ENCODE measurements at regions of chr13 and their contacts with region 1.

Region 1: DNA sequence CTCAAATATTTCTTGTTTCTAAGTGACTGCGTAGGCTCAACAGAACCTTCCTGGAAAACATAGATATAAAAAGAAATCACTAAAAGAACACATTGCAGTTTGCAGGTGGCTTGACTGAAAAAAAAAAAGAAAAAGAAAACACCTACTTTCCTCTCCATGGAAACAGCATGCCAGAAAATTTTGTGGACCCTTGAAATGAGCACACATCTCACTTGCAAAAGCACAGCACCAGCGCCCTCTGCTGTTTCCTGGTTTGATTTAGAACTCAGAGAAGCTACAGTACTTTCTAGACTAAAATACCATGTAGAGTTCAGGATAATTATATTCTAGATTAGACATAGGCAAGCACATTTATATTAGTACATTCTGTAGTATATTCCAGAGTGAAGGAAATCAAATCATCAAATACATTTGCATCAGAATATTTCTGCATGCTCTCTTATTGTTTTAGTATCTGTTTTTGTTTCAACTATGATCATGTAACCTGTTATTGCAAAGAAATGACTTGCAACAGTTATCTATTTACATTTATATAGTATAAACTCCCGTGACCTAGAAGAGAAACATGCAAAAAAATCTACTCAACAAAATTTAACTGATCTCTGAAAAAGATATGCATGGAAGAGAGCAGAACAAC is 22.3 kb upstream of the XPO4 start:
- DNase-seq: peak; percentile 46 to 80 (median 78)
- ATAC-seq: peak; percentile 44
- H3K4me3 ChIP-seq: no peak overlapping the region
- H3K4me3 Mint-ChIP-seq: no peak overlapping the region
- H3K27ac ChIP-seq: no peak overlapping the region
- H3K27ac Mint-ChIP-seq: no peak overlapping the region
- H3K4me1 ChIP-seq: no peaks in the 10 kb centered on the region
- H3K4me1 Mint-ChIP-seq: no peaks in the 10 kb centered on the region
- H3K27me3 ChIP-seq: no peaks in the 10 kb centered on the region
- H3K27me3 Mint-ChIP-seq: peaks cover 2% of the 10 kb centered on the region
- CTCF ChIP-seq: peak; percentile 87

Region 2: GRCh38 chr13:20019043-20019442 is 905.8 kb before region 1 on chr13:
- CTCF ChIA-PET with region 1: no interaction called
- POLR2A ChIA-PET with region 1: interaction called, 10 read pairs
- intact Hi-C with region 1: no loop called
- DNase-seq: no peak
- ATAC-seq: no peak
- H3K4me3 ChIP-seq: no peak overlapping the region
- H3K4me3 Mint-ChIP-seq: no peak overlapping the region
- H3K27ac ChIP-seq: no peak overlapping the region
- H3K27ac Mint-ChIP-seq: no peak overlapping the region
- H3K4me1 ChIP-seq: no peaks in the 10 kb centered on the region
- H3K4me1 Mint-ChIP-seq: peaks cover 29% of the 10 kb centered on the region
- H3K27me3 ChIP-seq: no peaks in the 10 kb centered on the region
- H3K27me3 Mint-ChIP-seq: no peaks in the 10 kb centered on the region
- CTCF ChIP-seq: no peak

Region 3: GRCh38 chr13:20182231-20182846 is 742.5 kb before region 1 on chr13:
- CTCF ChIA-PET with region 1: no interaction called
- POLR2A ChIA-PET with region 1: no interaction called
- intact Hi-C with region 1: loop called (anchors 1 kb)
- DNase-seq: peak in 8 of 9 experiments; percentile 12 to 84 (median 54)
- ATAC-seq: peak; percentile 100
- H3K4me3 ChIP-seq: no peak overlapping the region
- H3K4me3 Mint-ChIP-seq: no peak overlapping the region
- H3K27ac ChIP-seq: no peak overlapping the region
- H3K27ac Mint-ChIP-seq: no peak overlapping the region
- H3K4me1 ChIP-seq: no peaks in the 10 kb centered on the region
- H3K4me1 Mint-ChIP-seq: peaks cover 3% of the 10 kb centered on the region
- H3K27me3 ChIP-seq: no peaks in the 10 kb centered on the region
- H3K27me3 Mint-ChIP-seq: peaks cover 42% of the 10 kb centered on the region
- CTCF ChIP-seq: peak; percentile 62

Region 4: GRCh38 chr13:20197361-20197834 is 727.5 kb before region 1 on chr13:
- CTCF ChIA-PET with region 1: interaction called, 8 read pairs
- POLR2A ChIA-PET with region 1: no interaction called
- intact Hi-C with region 1: loop called (anchors 2 to 5 kb)
- DNase-seq: peak in 4 of 9 experiments; percentile 24 to 71 (median 46)
- ATAC-seq: peak; percentile 76
- H3K4me3 ChIP-seq: no peak overlapping the region
- H3K4me3 Mint-ChIP-seq: no peak overlapping the region
- H3K27ac ChIP-seq: no peak overlapping the region
- H3K27ac Mint-ChIP-seq: no peak overlapping the region
- H3K4me1 ChIP-seq: peaks cover 16% of the 10 kb centered on the region
- H3K4me1 Mint-ChIP-seq: peaks cover 18% of the 10 kb centered on the region
- H3K27me3 ChIP-seq: peaks cover 21 to 38% of the 10 kb centered on the region in 2 experiments
- H3K27me3 Mint-ChIP-seq: peaks cover 42% of the 10 kb centered on the region
- CTCF ChIP-seq: peak; percentile 78

Region 5: GRCh38 chr13:20713751-20714150 is 211.1 kb before region 1 on chr13:
- CTCF ChIA-PET with region 1: interaction called, 41 read pairs
- POLR2A ChIA-PET with region 1: no interaction called
- intact Hi-C with region 1: loop called (anchors 1 kb)
- DNase-seq: no peak
- ATAC-seq: no peak
- H3K4me3 ChIP-seq: no peak overlapping the region
- H3K4me3 Mint-ChIP-seq: no peak overlapping the region
- H3K27ac ChIP-seq: no peak overlapping the region
- H3K27ac Mint-ChIP-seq: no peak overlapping the region
- H3K4me1 ChIP-seq: peaks cover 4% of the 10 kb centered on the region
- H3K4me1 Mint-ChIP-seq: peaks cover 8% of the 10 kb centered on the region
- H3K27me3 ChIP-seq: no peaks in the 10 kb centered on the region
- H3K27me3 Mint-ChIP-seq: peaks cover 2% of the 10 kb centered on the region
- CTCF ChIP-seq: no peak

Region 6: GRCh38 chr13:20902438-20903163 is 22.3 kb before region 1 on chr13 and contains the start of gene XPO4:
- CTCF ChIA-PET with region 1: no interaction called
- POLR2A ChIA-PET with region 1: no interaction called
- intact Hi-C with region 1: loop called in 1 of 2 experiments (anchors 1 kb)
- DNase-seq: peak; percentile 55 to 88 (median 75)
- ATAC-seq: peak; percentile 96
- H3K4me3 ChIP-seq: peak within 1 kb of the TSS; percentile 81 to 89
- H3K4me3 Mint-ChIP-seq: peak within 1 kb of the TSS; percentile 94
- H3K27ac ChIP-seq: peak within 1 kb of the TSS; percentile 80 to 83
- H3K27ac Mint-ChIP-seq: peak within 1 kb of the TSS; percentile 93
- H3K4me1 ChIP-seq: peaks cover 11% of the 10 kb centered on the region
- H3K4me1 Mint-ChIP-seq: peaks cover 31% of the 10 kb centered on the region
- H3K27me3 ChIP-seq: no peaks in the 10 kb centered on the region
- H3K27me3 Mint-ChIP-seq: no peaks in the 10 kb centered on the region
- CTCF ChIP-seq: no peak
- total RNA-seq, gene XPO4: 23.8 to 24.5 TPM

Region 7: DNA sequence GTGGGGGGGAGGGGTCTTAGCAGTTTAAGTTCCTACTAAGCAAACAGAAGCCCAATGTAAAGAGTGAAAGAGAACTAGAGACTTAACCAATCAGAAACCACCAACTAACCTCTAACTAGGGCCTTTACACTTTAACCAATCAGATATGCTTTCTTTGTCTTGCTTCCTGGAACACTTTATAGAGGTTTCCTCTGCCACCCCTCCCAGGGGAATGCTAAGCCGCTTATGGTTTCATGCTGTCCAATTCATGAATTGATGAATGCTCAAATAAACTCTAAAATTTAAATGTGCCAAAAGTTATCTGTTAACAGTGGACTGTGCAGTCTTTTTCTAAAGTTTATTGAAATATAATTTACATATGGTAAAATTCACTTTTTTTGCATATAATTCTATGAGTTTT is 170.4 kb after region 1 on chr13:
- CTCF ChIA-PET with region 1: no interaction called
- POLR2A ChIA-PET with region 1: no interaction called
- intact Hi-C with region 1: no loop called
- DNase-seq: no peak
- ATAC-seq: no peak
- H3K4me3 ChIP-seq: no peak overlapping the region
- H3K4me3 Mint-ChIP-seq: no peak overlapping the region
- H3K27ac ChIP-seq: no peak overlapping the region
- H3K27ac Mint-ChIP-seq: no peak overlapping the region
- H3K4me1 ChIP-seq: no peaks in the 10 kb centered on the region
- H3K4me1 Mint-ChIP-seq: no peaks in the 10 kb centered on the region
- H3K27me3 ChIP-seq: no peaks in the 10 kb centered on the region
- H3K27me3 Mint-ChIP-seq: no peaks in the 10 kb centered on the region
- CTCF ChIP-seq: no peak

Measured in CD8-positive, alpha-beta T cell (primary cell).